ENCODE measurements at regions of chr6 and their contacts with region 1.

Region 1: GRCh38 chr6:27146706-27147505 is 100.6 kb upstream of the PRSS16 start:
- DNase-seq: peak; percentile 80
- ATAC-seq: peak; percentile 67
- H3K4me3 Mint-ChIP-seq: no peak overlapping the region
- H3K27ac Mint-ChIP-seq: no peak overlapping the region
- H3K4me1 Mint-ChIP-seq: peaks cover 23% of the 10 kb centered on the region
- H3K27me3 Mint-ChIP-seq: no peaks in the 10 kb centered on the region
- CTCF ChIP-seq: no peak

Region 2: GRCh38 chr6:26234421-26235296 is 912.2 kb before region 1 on chr6:
- CTCF ChIA-PET with region 1: no interaction called
- POLR2A ChIA-PET with region 1: interaction called, 12 read pairs
- DNase-seq: no peak
- ATAC-seq: peak; percentile 70
- H3K4me3 Mint-ChIP-seq: peak overlapping the region; percentile 94
- H3K27ac Mint-ChIP-seq: peak overlapping the region; percentile 99
- H3K4me1 Mint-ChIP-seq: peaks cover 33% of the 10 kb centered on the region
- H3K27me3 Mint-ChIP-seq: no peaks in the 10 kb centered on the region
- CTCF ChIP-seq: no peak

Region 3: DNA sequence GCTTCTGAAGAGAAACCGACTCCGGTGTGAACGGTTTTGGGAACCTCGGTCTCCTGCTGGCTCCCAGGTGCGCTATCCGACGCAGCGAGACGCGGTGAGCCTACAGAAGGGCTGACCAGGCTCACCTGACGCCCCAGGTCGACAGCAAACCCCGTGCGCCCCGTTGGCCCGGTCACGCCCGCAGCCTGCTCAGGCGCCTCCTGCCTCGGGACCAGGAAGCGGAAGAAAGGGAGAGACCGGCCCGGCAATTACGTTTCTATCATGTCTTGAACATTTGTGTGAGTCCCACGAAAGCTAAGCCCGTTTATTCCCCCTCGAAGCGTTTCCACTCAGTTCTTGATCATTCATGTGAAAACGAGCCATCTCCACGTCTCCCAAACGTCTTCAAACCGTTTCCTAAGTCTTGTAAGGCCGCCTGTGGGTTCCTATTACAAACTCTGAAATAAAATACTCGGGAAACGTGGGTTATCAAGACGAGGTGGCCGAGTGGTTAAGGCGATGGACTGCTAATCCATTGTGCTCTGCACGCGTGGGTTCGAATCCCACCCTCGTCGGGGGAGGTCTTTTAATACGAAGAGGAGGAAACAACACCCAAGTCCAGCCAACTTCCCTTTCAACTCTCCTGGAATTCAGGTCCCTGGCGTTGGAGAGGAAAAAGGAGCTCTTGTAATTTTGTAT is 49.9 kb before region 1 on chr6:
- CTCF ChIA-PET with region 1: no interaction called
- POLR2A ChIA-PET with region 1: no interaction called
- DNase-seq: peak; percentile 74
- ATAC-seq: peak; percentile 89
- H3K4me3 Mint-ChIP-seq: peak overlapping the region; percentile 72
- H3K27ac Mint-ChIP-seq: no peak overlapping the region
- H3K4me1 Mint-ChIP-seq: peaks cover 23% of the 10 kb centered on the region
- H3K27me3 Mint-ChIP-seq: peaks cover 22% of the 10 kb centered on the region
- CTCF ChIP-seq: no peak

Region 4: GRCh38 chr6:27132532-27133280 is 14.2 kb before region 1 on chr6:
- CTCF ChIA-PET with region 1: interaction called, 5 read pairs
- POLR2A ChIA-PET with region 1: interaction called, 286 read pairs
- DNase-seq: peak; percentile 85
- ATAC-seq: peak; percentile 86
- H3K4me3 Mint-ChIP-seq: no peak overlapping the region
- H3K27ac Mint-ChIP-seq: no peak overlapping the region
- H3K4me1 Mint-ChIP-seq: peaks cover 65% of the 10 kb centered on the region
- H3K27me3 Mint-ChIP-seq: no peaks in the 10 kb centered on the region
- CTCF ChIP-seq: no peak

Region 5: DNA sequence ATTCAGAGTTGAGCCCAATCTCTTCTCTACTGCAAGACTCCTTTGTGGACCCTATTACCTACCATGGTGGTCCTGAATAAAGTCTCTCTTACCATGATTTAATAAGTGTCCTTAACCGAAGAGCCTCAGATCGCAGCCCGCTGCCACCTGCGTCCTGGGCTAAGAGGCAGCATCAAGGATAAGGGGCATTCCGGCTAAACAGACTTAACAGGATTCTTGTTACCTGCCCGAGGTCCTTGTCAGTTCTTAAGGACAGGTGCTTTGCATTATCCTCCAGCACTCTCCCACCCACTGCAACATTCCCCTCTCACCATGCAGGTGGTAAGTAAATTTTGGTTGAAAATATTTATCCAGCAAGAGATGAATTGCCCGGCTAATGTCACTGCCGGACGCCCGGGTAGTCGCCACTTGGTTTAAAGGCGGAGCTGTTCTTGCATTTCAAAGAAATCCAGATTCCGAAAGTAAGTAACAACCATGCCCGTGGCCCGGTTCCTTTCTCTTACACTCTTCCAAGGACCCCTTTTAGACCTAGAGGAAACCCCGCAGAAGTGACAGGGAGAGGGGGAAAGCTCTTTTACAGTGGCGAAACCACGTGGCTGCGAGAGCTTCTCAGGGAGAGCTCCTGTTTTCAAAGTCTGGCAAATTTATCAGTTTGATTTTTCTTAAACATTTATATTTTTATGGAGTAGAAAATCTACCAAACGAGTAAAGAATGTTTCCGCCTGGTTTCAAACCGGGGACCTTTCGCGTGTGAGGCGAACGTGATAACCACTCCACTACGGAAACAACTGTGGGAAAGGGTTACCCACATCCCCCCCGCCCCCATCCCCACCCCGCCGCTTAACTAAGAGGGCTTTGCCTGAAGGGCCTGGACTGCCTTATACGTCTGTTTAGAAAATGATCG is 58.7 kb after region 1 on chr6:
- CTCF ChIA-PET with region 1: no interaction called
- POLR2A ChIA-PET with region 1: no interaction called
- DNase-seq: peak; percentile 20
- ATAC-seq: peak; percentile 65
- H3K4me3 Mint-ChIP-seq: peak overlapping the region; percentile 77
- H3K27ac Mint-ChIP-seq: no peak overlapping the region
- H3K4me1 Mint-ChIP-seq: peaks cover 26% of the 10 kb centered on the region
- H3K27me3 Mint-ChIP-seq: peaks cover 12% of the 10 kb centered on the region
- CTCF ChIP-seq: no peak

Region 6: GRCh38 chr6:27251606-27252251 is 104.8 kb after region 1 on chr6:
- CTCF ChIA-PET with region 1: no interaction called
- POLR2A ChIA-PET with region 1: interaction called, 14 read pairs
- DNase-seq: peak; percentile 97
- ATAC-seq: peak; percentile 88
- H3K4me3 Mint-ChIP-seq: peak overlapping the region; percentile 90
- H3K27ac Mint-ChIP-seq: peak overlapping the region; percentile 86
- H3K4me1 Mint-ChIP-seq: peaks cover 10% of the 10 kb centered on the region
- H3K27me3 Mint-ChIP-seq: no peaks in the 10 kb centered on the region; the same call in none of the 2 replicates
- CTCF ChIP-seq: no peak

Region 7: GRCh38 chr6:27406092-27406491 is 259.2 kb after region 1 on chr6:
- CTCF ChIA-PET with region 1: no interaction called
- POLR2A ChIA-PET with region 1: no interaction called
- DNase-seq: no peak
- ATAC-seq: no peak
- H3K4me3 Mint-ChIP-seq: no peak overlapping the region
- H3K27ac Mint-ChIP-seq: no peak overlapping the region
- H3K4me1 Mint-ChIP-seq: no peaks in the 10 kb centered on the region
- H3K27me3 Mint-ChIP-seq: no peaks in the 10 kb centered on the region
- CTCF ChIP-seq: no peak

Region 8: DNA sequence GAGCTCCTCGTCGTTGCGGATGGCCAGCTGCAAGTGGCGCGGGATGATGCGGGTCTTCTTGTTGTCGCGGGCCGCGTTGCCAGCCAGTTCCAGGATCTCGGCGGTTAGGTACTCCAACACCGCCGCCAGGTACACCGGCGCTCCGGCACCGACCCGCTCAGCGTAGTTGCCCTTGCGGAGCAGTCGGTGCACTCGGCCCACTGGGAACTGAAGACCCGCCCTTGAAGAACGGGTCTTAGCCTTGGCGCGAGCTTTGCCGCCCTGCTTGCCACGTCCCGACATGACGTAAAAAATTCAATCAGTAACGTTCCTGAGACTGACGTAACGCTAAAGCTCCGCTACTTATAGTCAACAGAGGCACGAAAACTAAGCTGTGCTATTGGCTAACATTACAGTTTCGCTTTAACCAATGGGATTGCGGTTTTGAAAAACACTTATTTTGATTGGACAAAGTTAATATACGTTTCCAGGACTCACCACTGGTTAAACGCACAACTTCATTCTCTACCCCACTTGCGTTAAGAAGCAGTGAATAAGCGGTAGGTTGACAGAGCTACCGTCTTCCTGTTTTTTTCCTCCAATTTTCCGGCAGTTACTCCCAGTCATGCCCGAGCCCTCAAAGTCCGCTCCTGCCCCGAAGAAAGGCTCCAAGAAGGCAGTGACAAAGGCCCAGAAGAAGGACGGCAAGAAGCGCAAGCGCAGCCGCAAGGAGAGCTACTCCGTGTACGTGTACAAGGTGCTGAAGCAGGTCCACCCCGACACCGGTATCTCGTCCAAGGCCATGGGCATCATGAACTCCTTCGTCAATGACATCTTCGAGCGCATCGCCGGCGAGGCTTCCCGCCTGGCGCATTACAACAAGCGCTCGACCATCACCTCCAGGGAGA is 691.4 kb after region 1 on chr6:
- CTCF ChIA-PET with region 1: no interaction called
- POLR2A ChIA-PET with region 1: interaction called, 40 read pairs
- DNase-seq: peak; percentile 84
- ATAC-seq: peak; percentile 84
- H3K4me3 Mint-ChIP-seq: no peak overlapping the region
- H3K27ac Mint-ChIP-seq: no peak overlapping the region
- H3K4me1 Mint-ChIP-seq: peaks cover 28% of the 10 kb centered on the region
- H3K27me3 Mint-ChIP-seq: no peaks in the 10 kb centered on the region
- CTCF ChIP-seq: no peak

Region 9: DNA sequence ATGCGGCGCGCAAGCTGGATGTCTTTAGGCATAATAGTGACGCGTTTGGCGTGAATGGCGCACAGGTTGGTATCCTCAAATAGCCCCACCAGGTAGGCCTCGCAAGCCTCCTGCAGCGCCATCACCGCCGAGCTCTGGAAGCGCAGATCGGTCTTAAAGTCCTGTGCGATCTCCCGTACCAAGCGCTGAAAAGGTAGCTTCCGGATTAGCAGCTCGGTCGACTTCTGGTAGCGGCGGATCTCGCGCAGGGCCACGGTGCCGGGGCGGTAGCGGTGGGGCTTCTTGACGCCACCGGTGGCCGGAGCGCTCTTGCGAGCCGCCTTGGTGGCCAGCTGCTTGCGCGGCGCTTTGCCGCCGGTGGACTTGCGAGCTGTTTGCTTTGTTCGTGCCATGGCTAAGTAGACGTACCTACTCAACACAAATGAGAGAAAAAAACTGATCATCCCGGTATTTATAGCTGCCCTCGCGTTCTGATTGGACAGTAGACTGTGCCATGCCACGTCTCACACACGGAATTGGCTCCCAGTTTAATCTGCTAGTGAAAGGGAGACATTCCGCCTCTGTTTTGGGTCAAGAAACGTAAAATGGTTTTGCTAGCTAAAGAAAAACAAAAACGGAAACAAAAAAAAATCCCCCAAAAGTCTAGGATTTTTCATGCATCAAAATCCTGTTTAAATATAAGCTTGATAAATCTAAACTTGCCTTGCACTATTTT is 725.2 kb after region 1 on chr6:
- CTCF ChIA-PET with region 1: no interaction called
- POLR2A ChIA-PET with region 1: interaction called, 50 read pairs
- DNase-seq: peak; percentile 79
- ATAC-seq: peak; percentile 58
- H3K4me3 Mint-ChIP-seq: peak overlapping the region; percentile 94
- H3K27ac Mint-ChIP-seq: peak overlapping the region; percentile 99
- H3K4me1 Mint-ChIP-seq: peaks cover 50% of the 10 kb centered on the region
- H3K27me3 Mint-ChIP-seq: no peaks in the 10 kb centered on the region
- CTCF ChIP-seq: no peak

Measured in WTC11 (cell line).